GM12878 (cell line): ENCODE measurements at regions of chr19 and their contacts with region 1.

Region 1: DNA sequence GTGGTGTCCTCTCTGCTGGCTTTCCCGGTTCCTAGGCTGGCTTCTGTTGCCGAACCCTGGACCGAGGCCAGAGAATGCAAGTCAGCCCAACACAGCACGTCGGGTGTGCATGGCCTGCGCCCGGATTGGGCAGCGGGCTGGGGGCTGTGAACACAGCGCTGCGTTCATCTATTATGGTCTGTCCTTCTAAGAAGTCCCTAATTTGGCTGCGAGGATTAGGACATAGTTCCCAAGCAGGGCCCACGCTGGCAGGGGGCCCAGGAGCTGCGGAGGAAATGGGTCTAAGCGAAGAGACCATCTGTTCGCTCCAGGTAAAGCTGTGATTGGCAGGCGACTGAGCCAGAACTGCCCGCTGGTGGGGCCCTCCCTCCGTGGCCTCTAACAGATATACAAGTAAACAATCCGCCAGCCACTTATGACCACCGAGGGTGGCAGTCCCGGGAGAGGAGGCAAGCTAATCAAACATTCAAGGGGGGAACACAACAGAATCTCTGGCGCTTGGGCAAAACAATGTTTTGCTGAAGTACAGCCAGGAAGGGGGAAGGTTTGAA is 6.0 kb downstream of the SYCE2 start:
- DNase-seq: no peak
- ATAC-seq: no peak
- H3K4me3 ChIP-seq: no peak overlapping the region
- H3K27ac ChIP-seq: no peak overlapping the region
- H3K4me1 ChIP-seq: peaks cover 7% of the 10 kb centered on the region
- H3K27me3 ChIP-seq: no peaks in the 10 kb centered on the region
- CTCF ChIP-seq: no peak
- EP300 ChIP-seq: no peak
- POLR2A ChIP-seq: no peak
- RAD21 ChIP-seq: no peak

Region 2: DNA sequence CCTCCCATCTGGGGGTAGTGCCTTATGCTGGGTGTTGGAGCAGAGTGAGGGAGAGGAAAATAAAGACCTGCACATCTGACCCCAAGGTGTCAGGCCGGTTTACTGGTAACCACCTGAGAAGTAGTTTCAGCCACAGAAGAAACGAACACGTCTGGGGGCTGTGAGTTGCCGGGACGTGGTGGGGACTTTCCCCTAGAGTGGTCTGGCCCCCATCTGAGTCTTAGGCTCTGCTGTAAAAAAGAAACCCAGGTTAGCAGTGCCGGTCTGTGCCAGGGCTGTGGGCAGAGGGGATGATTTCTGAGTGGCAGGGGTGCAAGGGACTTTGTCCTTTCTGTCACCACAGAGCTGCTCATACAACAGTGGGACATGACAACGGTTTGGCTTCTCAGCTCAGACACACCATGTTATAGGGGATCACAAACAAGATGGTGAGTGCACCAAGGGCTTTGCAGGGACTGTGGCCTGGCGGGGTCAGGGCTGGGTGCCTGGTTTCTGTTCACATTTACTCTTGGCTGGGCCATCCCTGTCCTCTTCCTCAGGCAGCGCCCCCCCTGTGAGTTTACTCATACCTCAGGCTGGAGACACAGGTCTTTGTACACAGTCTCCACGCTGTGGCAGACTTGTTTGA is 13.1 kb before region 1 on chr19:
- CTCF ChIA-PET with region 1: interaction called, 23 read pairs
- POLR2A ChIA-PET with region 1: interaction called, 9 read pairs
- RAD21 ChIA-PET with region 1: no interaction called
- SMC1A ChIA-PET with region 1: interaction called, 5 read pairs
- in situ Hi-C with region 1: no loop called
- intact Hi-C with region 1: no loop called
- DNase-seq: peak; percentile 61
- ATAC-seq: peak; percentile 97
- H3K4me3 ChIP-seq: peak overlapping the region; percentile 9; the same call in 1 of the 2 replicates
- H3K27ac ChIP-seq: peak overlapping the region; percentile 4; the same call in 1 of the 2 replicates
- H3K4me1 ChIP-seq: peaks cover 15% of the 10 kb centered on the region
- H3K27me3 ChIP-seq: no peaks in the 10 kb centered on the region
- CTCF ChIP-seq: peak in 2 of 3 experiments; percentile 1 to 18; a peak in 1 of 6 replicates
- EP300 ChIP-seq: peak; percentile 76 to 89; a peak in 3 of 4 replicates
- POLR2A ChIP-seq: no peak
- RAD21 ChIP-seq: no peak

Region 3: GRCh38 chr19:13146763-13147563 is 233.9 kb after region 1 on chr19:
- CTCF ChIA-PET with region 1: no interaction called
- POLR2A ChIA-PET with region 1: no interaction called
- RAD21 ChIA-PET with region 1: no interaction called
- SMC1A ChIA-PET with region 1: no interaction called
- in situ Hi-C with region 1: no loop called
- intact Hi-C with region 1: no loop called
- DNase-seq: no peak
- ATAC-seq: no peak
- H3K4me3 ChIP-seq: no peak overlapping the region
- H3K27ac ChIP-seq: no peak overlapping the region
- H3K4me1 ChIP-seq: peaks cover 4% of the 10 kb centered on the region
- H3K27me3 ChIP-seq: no peaks in the 10 kb centered on the region
- CTCF ChIP-seq: no peak
- EP300 ChIP-seq: no peak
- POLR2A ChIP-seq: no peak
- RAD21 ChIP-seq: no peak